Vagina (tissue), 2 donors: ENCODE measurements at regions of chr17 and their contacts with region 1.

Region 1: GRCh38 chr17:75814900-75815373 is 29.3 kb downstream of the UNC13D start:
- DNase-seq: no peak
- H3K4me3 ChIP-seq: no peak overlapping the region
- H3K27ac ChIP-seq: peak overlapping the region; percentile 8
- H3K4me1 ChIP-seq: peaks cover 34% of the 10 kb centered on the region
- H3K27me3 ChIP-seq: no peaks in the 10 kb centered on the region
- CTCF ChIP-seq: no peak
- POLR2A ChIP-seq: no peak

Region 2: GRCh38 chr17:75356260-75356937 is 458.5 kb before region 1 on chr17:
- intact Hi-C with region 1: loop called (anchors 5 kb)
- DNase-seq: no peak
- H3K4me3 ChIP-seq: no peak overlapping the region
- H3K27ac ChIP-seq: no peak overlapping the region
- H3K4me1 ChIP-seq: peaks cover 43% of the 10 kb centered on the region
- H3K27me3 ChIP-seq: no peaks in the 10 kb centered on the region
- CTCF ChIP-seq: no peak
- POLR2A ChIP-seq: no peak

Region 3: GRCh38 chr17:75855310-75856081 is 40.6 kb after region 1 on chr17 and contains the start of gene WBP2:
- intact Hi-C with region 1: no loop called
- DNase-seq: peak; percentile 100
- H3K4me3 ChIP-seq: peak within 1 kb of the TSS; percentile 81 to 97
- H3K27ac ChIP-seq: peak within 1 kb of the TSS; percentile 98
- H3K4me1 ChIP-seq: peaks cover 38% of the 10 kb centered on the region
- H3K27me3 ChIP-seq: no peaks in the 10 kb centered on the region
- CTCF ChIP-seq: peak in 2 of 3 experiments; percentile 5 to 43
- POLR2A ChIP-seq: peak; percentile 95 to 97
- total RNA-seq, gene WBP2: 54.3 TPM